ENCODE measurements at regions of chrX and their contacts with region 1.

Region 1: GRCh38 chrX:139932901-139933796 is at the start of gene ATP11C:
- DNase-seq: peak; percentile 80 to 82
- ATAC-seq: peak; percentile 94 to 98 (median 98)
- H3K4me3 ChIP-seq: peak within 1 kb of the TSS; percentile 55 to 93 (median 77)
- H3K27ac ChIP-seq: peak within 1 kb of the TSS; percentile 83 to 98 (median 93)
- H3K4me1 ChIP-seq: peaks cover 0 to 14% (median 0%) of the 10 kb centered on the region in 9 donors
- H3K27me3 ChIP-seq: peaks cover 0 to 40% (median 0%) of the 10 kb centered on the region in 7 donors
- CTCF ChIP-seq: peak in 3 of 9 donors; percentile 16 to 35 (median 22)
- total RNA-seq, gene ATP11C: 1.8 to 8.5 (median 3.3) TPM

Region 2: DNA sequence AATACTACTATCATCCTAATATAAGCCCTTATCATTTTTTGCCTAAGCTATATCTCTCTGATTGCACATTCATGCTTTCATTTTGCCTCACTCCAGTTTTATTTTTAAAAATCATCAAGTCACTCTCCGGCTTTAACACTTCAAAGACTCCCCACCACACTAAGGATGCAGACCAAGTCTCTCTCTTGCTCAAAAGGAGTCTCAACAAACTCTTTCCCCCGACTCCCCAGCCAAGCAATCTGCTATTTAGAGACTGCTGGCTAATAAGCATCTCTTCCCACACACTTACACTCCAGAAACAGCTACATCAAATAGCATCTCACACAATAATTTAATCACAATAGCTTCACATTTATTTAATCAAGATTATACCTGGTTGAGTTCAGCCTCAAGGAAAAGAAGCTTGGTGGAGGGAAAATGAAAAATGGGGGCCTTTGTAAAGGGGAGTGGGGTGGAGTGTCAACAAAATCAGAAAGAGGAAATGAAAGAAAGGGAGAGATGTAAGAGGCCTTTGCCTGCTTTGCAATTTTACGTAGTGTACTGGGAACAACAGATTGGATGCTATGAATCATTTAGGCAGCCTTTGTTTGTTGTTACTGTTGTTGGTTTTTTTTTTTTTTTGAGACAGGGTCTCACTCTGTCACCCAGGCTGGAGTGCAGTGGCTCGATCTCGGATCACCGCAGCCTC is 121.1 kb before region 1 on chrX:
- intact Hi-C with region 1: loop called in 1 of 10 experiments (anchors 5 kb)
- DNase-seq: no peak
- ATAC-seq: no peak
- H3K4me3 ChIP-seq: no peak overlapping the region
- H3K27ac ChIP-seq: no peak overlapping the region
- H3K4me1 ChIP-seq: no peaks in the 10 kb centered on the region
- H3K27me3 ChIP-seq: no peaks in the 10 kb centered on the region
- CTCF ChIP-seq: no peak

Region 3: DNA sequence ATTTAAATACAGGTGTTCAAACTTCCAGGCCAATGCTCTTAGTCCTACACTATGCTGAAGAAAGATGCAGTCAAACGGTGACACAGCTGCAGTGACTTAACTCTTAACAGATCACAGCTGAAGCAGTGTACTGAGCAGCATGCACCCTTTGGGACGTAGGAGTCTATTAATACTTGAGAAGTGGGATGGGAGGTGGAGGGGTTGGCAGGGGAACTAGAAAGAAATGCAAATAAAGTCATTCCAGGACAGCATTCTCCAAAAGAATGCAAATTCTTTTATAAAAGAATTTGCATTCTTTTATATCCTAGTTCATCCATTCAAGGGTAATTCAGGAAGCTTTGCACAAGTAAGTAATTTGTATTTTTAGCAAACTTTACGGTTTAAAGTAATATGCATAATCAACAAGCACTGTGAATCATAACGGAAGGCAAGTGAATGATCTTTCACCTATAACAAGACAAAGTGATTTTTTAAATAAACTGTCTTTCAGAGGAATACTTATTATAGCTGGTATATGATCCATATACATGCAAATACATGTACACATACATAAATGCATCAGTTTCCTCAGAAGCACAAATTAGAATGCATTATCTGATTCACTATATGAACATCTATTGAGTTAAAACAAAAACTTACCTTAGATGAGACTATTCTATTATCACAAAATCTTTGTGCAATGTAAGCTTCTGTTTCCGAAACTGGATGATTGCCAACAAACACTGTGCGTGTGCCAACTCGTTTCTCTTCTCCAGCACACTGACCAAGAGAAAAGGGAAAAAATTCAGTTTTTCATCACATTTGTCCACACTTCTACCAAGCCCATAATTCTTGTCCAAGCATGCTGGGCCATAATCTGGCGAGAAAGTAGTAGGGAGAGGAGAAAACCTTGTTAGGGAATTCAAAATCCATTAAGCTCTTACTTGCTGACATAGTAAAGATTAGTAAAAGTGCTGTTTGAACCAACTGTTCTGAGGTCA is 106.8 kb before region 1 on chrX:
- intact Hi-C with region 1: loop called in 4 of 10 experiments (anchors 5 to 10 kb)
- DNase-seq: no peak
- ATAC-seq: no peak
- H3K4me3 ChIP-seq: no peak overlapping the region
- H3K27ac ChIP-seq: no peak overlapping the region
- H3K4me1 ChIP-seq: peaks cover 0 to 52% (median 9%) of the 10 kb centered on the region in 9 donors
- H3K27me3 ChIP-seq: peaks cover 0 to 11% (median 0%) of the 10 kb centered on the region in 7 donors
- CTCF ChIP-seq: no peak

Region 4: DNA sequence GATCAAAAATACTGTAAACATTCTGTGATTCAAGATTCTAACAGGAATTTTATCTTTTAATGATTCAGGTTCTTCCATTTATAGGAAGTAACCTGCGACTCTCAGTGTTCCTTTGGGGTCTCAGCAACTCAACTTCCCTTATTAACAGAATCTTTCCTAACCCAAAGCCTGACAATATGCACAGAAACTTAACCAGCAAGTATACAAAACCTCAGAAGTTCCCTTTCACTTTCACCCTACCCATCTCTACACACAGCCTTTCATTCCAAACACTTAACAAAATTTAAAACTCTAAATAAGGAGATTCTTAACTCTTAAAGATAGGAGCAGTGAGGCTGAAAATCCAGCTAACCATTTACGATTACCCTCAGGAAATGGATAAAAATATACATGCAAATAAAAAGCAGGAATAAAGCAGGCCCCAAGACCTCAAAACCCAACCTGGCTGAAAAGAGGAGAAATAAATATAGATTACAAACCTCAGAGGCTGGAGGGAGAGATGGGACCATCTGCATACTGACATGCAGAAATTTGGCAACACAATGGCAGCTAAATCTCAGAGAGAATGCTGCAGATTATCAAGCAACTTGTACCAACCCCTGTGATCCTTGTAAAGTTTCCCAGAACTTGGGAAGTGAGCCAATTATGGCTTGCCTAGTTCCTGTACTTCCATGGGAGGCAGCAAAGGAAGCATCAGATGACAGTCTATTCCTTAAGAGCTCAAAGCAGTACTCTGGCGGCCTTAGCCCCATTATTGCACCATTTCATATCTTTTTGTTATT is 101.3 kb before region 1 on chrX:
- intact Hi-C with region 1: loop called in 4 of 10 experiments (anchors 5 to 10 kb)
- DNase-seq: peak in 1 of 2 donors; percentile 12
- ATAC-seq: peak in 6 of 8 donors; percentile 55 to 78 (median 59)
- H3K4me3 ChIP-seq: no peak overlapping the region
- H3K27ac ChIP-seq: peak overlapping the region in 3 of 10 donors; percentile 26 to 53 (median 46)
- H3K4me1 ChIP-seq: peaks cover 0 to 50% (median 24%) of the 10 kb centered on the region in 9 donors
- H3K27me3 ChIP-seq: peaks cover 0 to 11% (median 0%) of the 10 kb centered on the region in 7 donors
- CTCF ChIP-seq: no peak

Region 5: GRCh38 chrX:139881572-139881971 is 51.6 kb before region 1 on chrX:
- intact Hi-C with region 1: loop called in 1 of 10 experiments (anchors 5 kb)
- DNase-seq: peak in 1 of 2 donors; percentile 3
- ATAC-seq: peak in 5 of 8 donors; percentile 33 to 81 (median 68)
- H3K4me3 ChIP-seq: no peak overlapping the region
- H3K27ac ChIP-seq: peak overlapping the region in 7 of 10 donors; percentile 36 to 72 (median 55)
- H3K4me1 ChIP-seq: peaks cover 0 to 39% (median 5%) of the 10 kb centered on the region in 9 donors
- H3K27me3 ChIP-seq: no peaks in the 10 kb centered on the region
- CTCF ChIP-seq: no peak